ENCODE measurements at regions of chr11 and their contacts with region 1.

Region 1: DNA sequence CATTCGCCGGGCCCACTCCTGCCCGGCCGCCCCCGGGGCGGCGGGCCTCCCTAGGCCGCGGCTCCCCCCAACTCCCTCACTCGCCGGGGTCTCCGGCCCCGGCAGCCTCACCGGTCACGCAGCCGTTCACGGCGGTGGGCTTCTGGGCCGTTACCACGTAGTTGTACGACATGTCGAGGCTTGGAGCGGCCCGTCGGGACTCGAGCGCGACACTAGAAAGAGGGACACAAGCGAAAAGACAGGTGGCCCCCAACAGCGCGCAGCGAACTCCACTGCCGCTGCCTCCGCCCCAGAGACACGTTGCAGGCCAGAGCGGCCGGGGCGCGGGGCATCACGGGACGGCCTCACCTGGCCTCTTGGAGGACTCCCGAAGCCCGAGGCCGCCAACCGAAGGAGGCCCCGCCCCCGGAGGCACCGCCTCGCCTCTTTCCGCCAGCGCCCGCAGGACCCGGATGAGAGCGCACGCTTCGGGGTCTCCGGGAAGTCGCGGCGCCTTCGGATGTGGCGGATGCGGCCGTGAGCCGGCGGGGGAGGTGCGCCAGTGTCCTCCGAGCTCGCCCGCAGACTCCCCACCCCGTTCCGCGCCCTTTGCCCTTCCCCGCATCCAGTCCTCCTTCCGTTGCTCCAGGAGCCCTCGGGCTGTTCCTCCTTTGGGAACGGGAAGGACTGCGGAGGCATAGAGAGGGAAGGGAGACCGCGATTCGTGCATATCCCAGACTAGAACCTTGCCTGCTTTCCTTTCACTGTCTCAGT is at the starts of genes DDB1 and TKFC:
- DNase-seq: peak; percentile 93 to 99 (median 97)
- ATAC-seq: peak; percentile 93
- H3K4me3 ChIP-seq: peak within 1 kb of the TSS; percentile 78 to 80
- H3K4me3 Mint-ChIP-seq: peak within 1 kb of the TSS; percentile 95
- H3K27ac ChIP-seq: peak within 1 kb of the TSS; percentile 68 to 94
- H3K27ac Mint-ChIP-seq: peak within 1 kb of the TSS; percentile 98
- H3K4me1 ChIP-seq: peaks cover 36% of the 10 kb centered on the region
- H3K4me1 Mint-ChIP-seq: peaks cover 57% of the 10 kb centered on the region
- H3K27me3 ChIP-seq: no peaks in the 10 kb centered on the region
- H3K27me3 Mint-ChIP-seq: no peaks in the 10 kb centered on the region
- CTCF ChIP-seq: no peak
- total RNA-seq, gene DDB1: 196 to 201 TPM
- total RNA-seq, gene TKFC: 15.8 to 16.1 TPM

Region 2: DNA sequence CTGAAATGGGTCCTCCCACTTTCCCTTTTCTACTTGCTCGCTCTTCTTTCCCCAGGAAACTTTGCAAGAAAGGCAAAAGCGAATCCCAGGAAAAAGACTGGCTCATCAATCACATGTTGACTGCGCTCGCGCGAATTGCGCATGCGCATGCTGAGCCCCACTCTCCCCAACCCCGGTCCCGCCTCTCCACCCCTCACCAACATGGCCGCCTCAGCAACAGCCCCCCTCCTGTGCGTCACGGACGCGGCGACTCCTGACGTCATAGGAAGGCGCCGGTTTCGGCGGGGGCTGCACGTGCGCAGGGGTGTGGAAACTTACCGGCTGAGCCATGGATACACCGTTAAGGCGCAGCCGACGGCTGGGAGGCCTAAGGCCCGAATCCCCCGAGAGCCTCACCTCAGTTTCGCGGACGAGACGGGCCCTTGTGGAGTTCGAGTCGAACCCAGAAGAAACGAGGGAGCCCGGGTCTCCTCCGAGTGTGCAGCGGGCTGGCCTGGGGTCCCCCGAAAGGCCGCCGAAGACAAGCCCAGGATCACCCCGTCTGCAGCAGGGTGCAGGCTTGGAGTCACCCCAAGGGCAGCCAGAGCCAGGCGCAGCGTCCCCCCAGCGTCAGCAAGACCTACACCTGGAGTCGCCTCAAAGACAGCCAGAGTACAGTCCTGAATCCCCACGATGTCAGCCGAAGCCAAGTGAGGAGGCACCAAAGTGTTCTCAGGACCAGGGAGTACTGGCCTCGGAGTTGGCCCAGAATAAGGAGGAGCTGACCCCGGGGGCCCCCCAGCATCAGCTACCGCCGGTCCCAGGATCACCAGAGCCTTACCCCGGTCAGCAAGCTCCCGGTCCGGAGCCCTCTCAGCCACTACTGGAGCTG is 490.9 kb before region 1 on chr11 and contains the start of gene CCDC86:
- CTCF ChIA-PET with region 1: no interaction called
- POLR2A ChIA-PET with region 1: no interaction called
- intact Hi-C with region 1: loop called in 1 of 2 experiments (anchors 2 kb)
- DNase-seq: peak; percentile 97 to 100 (median 98)
- ATAC-seq: peak; percentile 97
- H3K4me3 ChIP-seq: peak within 1 kb of the TSS; percentile 84 to 93
- H3K4me3 Mint-ChIP-seq: peak within 1 kb of the TSS; percentile 93
- H3K27ac ChIP-seq: peak within 1 kb of the TSS; percentile 71 to 83
- H3K27ac Mint-ChIP-seq: peak within 1 kb of the TSS; percentile 97
- H3K4me1 ChIP-seq: peaks cover 35% of the 10 kb centered on the region
- H3K4me1 Mint-ChIP-seq: peaks cover 46% of the 10 kb centered on the region
- H3K27me3 ChIP-seq: no peaks in the 10 kb centered on the region
- H3K27me3 Mint-ChIP-seq: no peaks in the 10 kb centered on the region
- CTCF ChIP-seq: no peak
- total RNA-seq, gene CCDC86: 10.8 to 11.9 TPM

Region 3: DNA sequence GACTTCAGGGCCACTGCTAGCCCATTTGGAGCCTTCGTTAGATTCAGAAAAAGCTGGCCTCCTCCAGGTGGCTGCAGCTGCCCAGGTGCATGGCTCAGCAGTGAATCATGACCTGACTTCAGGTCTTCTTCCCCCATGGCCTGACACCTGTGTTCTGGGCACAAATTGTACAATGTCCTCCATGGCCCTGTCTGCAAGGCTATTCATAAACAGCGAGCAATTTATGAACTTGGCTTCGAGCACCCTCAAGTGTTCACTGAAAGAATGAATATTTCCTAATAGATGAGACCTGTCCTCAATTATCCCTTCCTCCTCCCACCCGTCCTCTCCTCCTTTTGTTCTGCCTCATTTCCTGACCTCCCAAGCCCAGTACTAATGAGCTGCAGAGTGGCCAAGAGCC is 159.5 kb before region 1 on chr11:
- CTCF ChIA-PET with region 1: no interaction called
- POLR2A ChIA-PET with region 1: no interaction called
- intact Hi-C with region 1: no loop called
- DNase-seq: no peak
- ATAC-seq: no peak
- H3K4me3 ChIP-seq: no peak overlapping the region
- H3K4me3 Mint-ChIP-seq: no peak overlapping the region
- H3K27ac ChIP-seq: no peak overlapping the region
- H3K27ac Mint-ChIP-seq: no peak overlapping the region
- H3K4me1 ChIP-seq: peaks cover 14% of the 10 kb centered on the region
- H3K4me1 Mint-ChIP-seq: peaks cover 21% of the 10 kb centered on the region
- H3K27me3 ChIP-seq: no peaks in the 10 kb centered on the region
- H3K27me3 Mint-ChIP-seq: no peaks in the 10 kb centered on the region
- CTCF ChIP-seq: no peak

Region 4: DNA sequence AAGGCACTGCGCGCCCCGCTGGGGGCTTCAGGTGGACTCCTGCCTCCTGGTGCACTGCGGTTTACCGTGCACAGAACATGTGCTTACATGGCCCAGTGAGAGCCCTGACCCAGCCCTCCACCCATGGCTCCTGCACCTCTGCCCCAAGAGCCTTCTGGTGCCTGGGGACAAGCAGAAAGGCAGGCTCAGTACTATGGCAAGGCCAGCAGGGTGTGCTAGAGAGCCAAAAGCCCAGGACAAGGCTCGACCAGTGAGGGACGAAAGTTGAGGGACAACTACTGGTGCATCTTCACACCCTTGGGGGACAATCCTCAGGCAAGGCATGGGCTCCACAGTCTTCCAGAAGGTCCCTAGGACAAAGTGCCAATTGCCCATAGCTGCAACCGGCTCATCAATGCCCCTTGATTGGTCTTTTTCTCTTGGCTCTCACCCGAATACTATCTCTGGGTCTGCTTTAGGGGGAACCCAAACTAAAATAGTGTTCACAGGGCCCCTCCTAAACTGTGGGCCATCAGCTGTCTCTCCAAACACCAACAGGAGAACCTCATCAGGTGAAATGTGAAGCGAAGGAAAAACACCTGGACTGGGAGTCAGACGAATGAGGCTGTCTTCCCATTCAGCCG is 78.5 kb before region 1 on chr11:
- CTCF ChIA-PET with region 1: interaction called, 10 read pairs
- POLR2A ChIA-PET with region 1: no interaction called
- intact Hi-C with region 1: no loop called
- DNase-seq: peak; percentile 31 to 70 (median 58)
- ATAC-seq: peak; percentile 91
- H3K4me3 ChIP-seq: no peak overlapping the region
- H3K4me3 Mint-ChIP-seq: no peak overlapping the region
- H3K27ac ChIP-seq: no peak overlapping the region
- H3K27ac Mint-ChIP-seq: no peak overlapping the region
- H3K4me1 ChIP-seq: no peaks in the 10 kb centered on the region
- H3K4me1 Mint-ChIP-seq: no peaks in the 10 kb centered on the region
- H3K27me3 ChIP-seq: no peaks in the 10 kb centered on the region
- H3K27me3 Mint-ChIP-seq: no peaks in the 10 kb centered on the region
- CTCF ChIP-seq: peak; percentile 70

Region 5: GRCh38 chr11:61361686-61362541 is 28.9 kb after region 1 on chr11 and contains the starts of genes CYB561A3 and TMEM138:
- CTCF ChIA-PET with region 1: interaction called, 106 read pairs
- POLR2A ChIA-PET with region 1: interaction called, 37 read pairs
- intact Hi-C with region 1: loop called (anchors 1 kb)
- DNase-seq: peak; percentile 68 to 93 (median 87)
- ATAC-seq: peak; percentile 84
- H3K4me3 ChIP-seq: peak within 1 kb of the TSS; percentile 94 to 98
- H3K4me3 Mint-ChIP-seq: peak within 1 kb of the TSS; percentile 98
- H3K27ac ChIP-seq: peak within 1 kb of the TSS; percentile 87 to 98
- H3K27ac Mint-ChIP-seq: peak within 1 kb of the TSS; percentile 98
- H3K4me1 ChIP-seq: peaks cover 20% of the 10 kb centered on the region
- H3K4me1 Mint-ChIP-seq: peaks cover 37% of the 10 kb centered on the region
- H3K27me3 ChIP-seq: no peaks in the 10 kb centered on the region
- H3K27me3 Mint-ChIP-seq: no peaks in the 10 kb centered on the region
- CTCF ChIP-seq: no peak
- total RNA-seq, gene CYB561A3: 23.1 to 28.1 TPM
- total RNA-seq, gene TMEM138: 60.7 to 62.5 TPM

Region 6: GRCh38 chr11:61384271-61385242 is 51.6 kb after region 1 on chr11:
- CTCF ChIA-PET with region 1: interaction called, 470 read pairs
- POLR2A ChIA-PET with region 1: interaction called, 28 read pairs
- intact Hi-C with region 1: loop called (anchors 1 kb)
- DNase-seq: no peak
- ATAC-seq: no peak
- H3K4me3 ChIP-seq: no peak overlapping the region
- H3K4me3 Mint-ChIP-seq: no peak overlapping the region
- H3K27ac ChIP-seq: no peak overlapping the region
- H3K27ac Mint-ChIP-seq: no peak overlapping the region
- H3K4me1 ChIP-seq: no peaks in the 10 kb centered on the region
- H3K4me1 Mint-ChIP-seq: peaks cover 7% of the 10 kb centered on the region
- H3K27me3 ChIP-seq: no peaks in the 10 kb centered on the region
- H3K27me3 Mint-ChIP-seq: no peaks in the 10 kb centered on the region
- CTCF ChIP-seq: no peak

Region 7: DNA sequence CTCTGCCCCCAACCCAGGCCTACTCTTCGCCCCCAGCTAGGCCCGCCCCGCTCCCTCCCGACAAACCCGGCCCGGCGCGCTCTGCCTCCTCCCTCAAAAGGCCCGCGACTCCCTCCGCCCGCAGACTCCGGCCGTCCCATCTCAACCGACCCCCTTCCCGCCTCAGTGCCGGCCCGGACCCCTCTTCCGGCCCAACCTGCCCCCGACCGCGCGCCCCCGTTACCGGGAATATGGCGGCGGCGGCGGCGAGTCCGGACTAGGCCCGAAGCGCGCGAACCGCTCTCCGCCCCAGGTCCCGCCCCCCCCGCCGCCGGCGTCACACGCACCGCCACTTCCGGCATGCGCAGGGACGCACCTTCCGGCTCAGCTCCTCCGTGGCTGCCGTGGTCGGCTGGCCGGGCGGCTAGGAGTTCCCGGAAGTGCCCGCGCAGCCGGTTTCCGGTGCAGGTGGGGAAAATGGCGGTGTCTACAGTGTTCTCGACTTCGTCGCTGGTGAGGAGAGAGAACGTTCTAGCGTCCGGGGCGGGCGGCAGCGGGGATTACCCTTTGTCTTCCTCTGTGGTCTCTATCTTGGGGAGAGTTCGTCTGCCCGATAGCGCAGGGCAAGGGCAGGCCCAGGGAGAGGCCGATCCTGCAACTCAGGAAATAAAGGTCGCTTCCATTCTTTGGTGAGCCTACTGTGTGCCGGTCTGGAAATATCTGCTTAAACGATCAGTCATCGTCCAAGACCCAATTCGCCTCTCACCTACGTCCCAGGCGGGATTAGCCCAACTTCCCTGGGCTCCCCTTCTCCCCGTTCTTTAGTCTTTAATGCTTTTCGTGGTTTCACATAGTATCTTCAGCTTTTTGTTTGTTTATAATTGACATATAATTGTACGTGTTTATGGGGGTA is 97.0 kb after region 1 on chr11 and contains the starts of genes CPSF7 and SDHAF2:
- CTCF ChIA-PET with region 1: interaction called, 26 read pairs
- POLR2A ChIA-PET with region 1: interaction called, 16 read pairs
- intact Hi-C with region 1: loop called (anchors 1 kb)
- DNase-seq: peak; percentile 93 to 99 (median 98)
- ATAC-seq: peak; percentile 80
- H3K4me3 ChIP-seq: peak within 1 kb of the TSS; percentile 70 to 95
- H3K4me3 Mint-ChIP-seq: peak within 1 kb of the TSS; percentile 97
- H3K27ac ChIP-seq: peak within 1 kb of the TSS; percentile 98 to 100
- H3K27ac Mint-ChIP-seq: peak within 1 kb of the TSS; percentile 100
- H3K4me1 ChIP-seq: peaks cover 53% of the 10 kb centered on the region
- H3K4me1 Mint-ChIP-seq: peaks cover 72% of the 10 kb centered on the region
- H3K27me3 ChIP-seq: no peaks in the 10 kb centered on the region
- H3K27me3 Mint-ChIP-seq: no peaks in the 10 kb centered on the region
- CTCF ChIP-seq: no peak
- total RNA-seq, gene CPSF7: 106 to 111 TPM
- total RNA-seq, gene SDHAF2: 31.4 to 33.0 TPM

Region 8: GRCh38 chr11:61581030-61581928 is 248.3 kb after region 1 on chr11 and contains the start of gene SYT7:
- CTCF ChIA-PET with region 1: no interaction called
- POLR2A ChIA-PET with region 1: no interaction called
- intact Hi-C with region 1: loop called in 1 of 2 experiments (anchors 10 kb)
- DNase-seq: peak; percentile 87 to 97 (median 93)
- ATAC-seq: peak; percentile 87
- H3K4me3 ChIP-seq: peak within 1 kb of the TSS; percentile 22 to 38
- H3K4me3 Mint-ChIP-seq: peak within 1 kb of the TSS; percentile 86
- H3K27ac ChIP-seq: no peak within 1 kb of the TSS
- H3K27ac Mint-ChIP-seq: peak within 1 kb of the TSS; percentile 33
- H3K4me1 ChIP-seq: peaks cover 14% of the 10 kb centered on the region
- H3K4me1 Mint-ChIP-seq: peaks cover 14% of the 10 kb centered on the region
- H3K27me3 ChIP-seq: peaks cover 13 to 20% of the 10 kb centered on the region in 2 experiments
- H3K27me3 Mint-ChIP-seq: peaks cover 36% of the 10 kb centered on the region
- CTCF ChIP-seq: no peak
- total RNA-seq, gene SYT7: not detected